ENCODE measurements at regions of chr15 and their contacts with region 1.

Region 1: GRCh38 chr15:90362936-90363212 is 10.8 kb downstream of the ZNF774 start:
- DNase-seq: no peak
- ATAC-seq: no peak
- H3K4me3 Mint-ChIP-seq: no peak overlapping the region
- H3K27ac Mint-ChIP-seq: peak overlapping the region; percentile 19
- H3K4me1 Mint-ChIP-seq: peaks cover 32% of the 10 kb centered on the region
- H3K27me3 Mint-ChIP-seq: peaks cover 2% of the 10 kb centered on the region

Region 2: DNA sequence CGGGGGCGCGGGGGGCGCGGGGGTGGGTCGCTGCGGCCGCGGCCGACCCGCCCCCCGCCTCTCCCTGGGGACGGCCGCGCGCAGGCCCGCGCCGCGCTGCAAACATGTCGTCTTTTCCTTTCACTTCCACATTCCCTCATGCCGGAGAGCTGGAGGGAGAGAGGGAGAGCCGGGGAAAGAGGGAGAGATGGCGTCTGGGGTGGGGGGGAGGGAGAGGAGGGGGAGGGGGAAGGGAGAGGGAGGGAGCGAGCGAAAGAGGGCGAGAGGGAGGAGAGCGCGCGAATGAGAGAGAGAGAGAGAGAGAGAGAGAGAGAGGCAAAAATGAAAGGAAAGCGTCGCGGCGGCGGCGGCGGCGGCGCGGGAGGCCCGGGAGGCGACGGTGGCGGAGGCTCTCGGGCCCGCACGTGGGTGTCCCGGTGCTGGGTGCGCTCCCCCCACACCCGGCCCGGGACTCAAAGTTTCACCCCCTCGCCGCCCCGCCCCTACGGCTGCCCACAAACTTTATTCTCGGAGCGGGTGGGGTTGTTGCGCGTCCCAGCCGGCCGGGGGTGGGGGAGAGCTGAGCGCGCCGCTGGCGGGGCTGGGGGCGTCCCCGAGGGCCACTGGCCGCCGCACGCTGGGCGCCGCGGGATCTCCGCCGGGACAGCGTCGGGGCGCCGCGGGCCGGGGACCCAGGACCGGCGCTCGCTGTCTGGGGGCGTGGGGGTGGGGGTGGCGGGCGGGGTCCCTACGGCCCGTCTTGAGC is 361.0 kb before region 1 on chr15:
- CTCF ChIA-PET with region 1: no interaction called
- DNase-seq: peak; percentile 70
- ATAC-seq: peak; percentile 60
- H3K4me3 Mint-ChIP-seq: peak overlapping the region; percentile 86
- H3K27ac Mint-ChIP-seq: peak overlapping the region; percentile 83
- H3K4me1 Mint-ChIP-seq: peaks cover 39% of the 10 kb centered on the region
- H3K27me3 Mint-ChIP-seq: no peaks in the 10 kb centered on the region

Region 3: DNA sequence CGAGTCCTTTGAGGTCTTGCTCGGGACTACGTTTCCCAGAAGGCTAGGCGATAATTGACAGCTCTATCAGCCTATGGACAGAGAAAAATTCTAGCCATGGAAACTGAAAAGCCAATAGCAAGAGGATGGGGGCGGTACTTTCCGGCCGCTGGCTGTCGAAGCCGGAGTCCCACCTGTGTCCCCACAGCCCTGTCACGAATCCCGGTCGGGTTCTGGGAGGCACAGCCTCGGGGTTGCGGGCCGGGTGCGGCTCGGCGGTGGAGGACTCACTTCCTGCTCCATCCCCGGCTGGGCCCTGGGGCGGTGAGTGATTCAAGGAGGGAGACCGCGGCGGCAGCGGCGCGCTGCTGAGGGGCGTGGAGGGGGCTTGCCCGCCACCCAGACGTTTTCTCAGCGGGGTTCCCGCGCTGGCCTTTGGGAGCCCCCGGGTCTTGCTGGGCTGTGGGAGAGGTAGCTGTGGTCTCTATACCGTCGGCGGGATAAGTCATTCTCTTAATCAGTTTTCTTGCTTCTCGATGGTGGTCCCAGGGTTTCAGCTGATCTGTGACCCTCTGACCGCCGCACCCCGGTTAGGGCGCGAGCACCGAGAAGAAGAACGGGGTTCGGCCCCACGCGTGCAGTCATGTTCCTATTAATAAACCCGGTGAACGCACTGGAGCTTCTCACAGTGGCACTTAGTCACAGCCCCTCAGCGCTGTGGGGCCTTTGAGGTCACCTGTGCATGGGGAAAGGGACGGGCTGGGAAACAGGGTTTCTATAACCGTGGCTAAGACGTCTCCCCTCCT is 10.6 kb before region 1 on chr15 and contains the start of gene ZNF774:
- CTCF ChIA-PET with region 1: interaction called, 16 read pairs
- DNase-seq: peak; percentile 95
- ATAC-seq: peak; percentile 99
- H3K4me3 Mint-ChIP-seq: peak within 1 kb of the TSS; percentile 81
- H3K27ac Mint-ChIP-seq: peak within 1 kb of the TSS; percentile 67
- H3K4me1 Mint-ChIP-seq: peaks cover 25% of the 10 kb centered on the region
- H3K27me3 Mint-ChIP-seq: peaks cover 11% of the 10 kb centered on the region
- total RNA-seq, gene ZNF774: 1.6 to 2.1 TPM

Region 4: DNA sequence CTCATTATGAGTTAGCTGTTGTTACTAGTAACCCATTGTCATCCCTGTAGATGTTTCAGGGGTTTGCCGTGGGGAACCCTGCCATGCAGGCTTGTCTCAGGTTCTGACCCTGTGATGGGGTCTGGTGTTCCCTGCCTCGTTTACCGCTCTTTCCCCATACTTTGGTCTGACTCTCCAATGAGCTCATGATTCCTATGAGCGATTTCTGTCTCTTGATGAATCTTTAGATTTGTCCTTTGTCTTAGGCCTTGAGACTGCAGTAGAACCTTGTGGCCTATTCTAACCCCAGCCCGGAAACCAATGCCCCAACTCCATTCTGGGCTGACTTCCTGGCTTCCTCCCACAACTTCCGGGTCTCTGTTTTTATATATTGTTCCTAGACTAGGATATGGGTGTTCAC is 13.9 kb after region 1 on chr15:
- CTCF ChIA-PET with region 1: interaction called, 67 read pairs
- DNase-seq: peak; percentile 93
- ATAC-seq: peak; percentile 92
- H3K4me3 Mint-ChIP-seq: peak overlapping the region; percentile 47
- H3K27ac Mint-ChIP-seq: peak overlapping the region; percentile 94
- H3K4me1 Mint-ChIP-seq: peaks cover 36% of the 10 kb centered on the region
- H3K27me3 Mint-ChIP-seq: no peaks in the 10 kb centered on the region

Region 5: DNA sequence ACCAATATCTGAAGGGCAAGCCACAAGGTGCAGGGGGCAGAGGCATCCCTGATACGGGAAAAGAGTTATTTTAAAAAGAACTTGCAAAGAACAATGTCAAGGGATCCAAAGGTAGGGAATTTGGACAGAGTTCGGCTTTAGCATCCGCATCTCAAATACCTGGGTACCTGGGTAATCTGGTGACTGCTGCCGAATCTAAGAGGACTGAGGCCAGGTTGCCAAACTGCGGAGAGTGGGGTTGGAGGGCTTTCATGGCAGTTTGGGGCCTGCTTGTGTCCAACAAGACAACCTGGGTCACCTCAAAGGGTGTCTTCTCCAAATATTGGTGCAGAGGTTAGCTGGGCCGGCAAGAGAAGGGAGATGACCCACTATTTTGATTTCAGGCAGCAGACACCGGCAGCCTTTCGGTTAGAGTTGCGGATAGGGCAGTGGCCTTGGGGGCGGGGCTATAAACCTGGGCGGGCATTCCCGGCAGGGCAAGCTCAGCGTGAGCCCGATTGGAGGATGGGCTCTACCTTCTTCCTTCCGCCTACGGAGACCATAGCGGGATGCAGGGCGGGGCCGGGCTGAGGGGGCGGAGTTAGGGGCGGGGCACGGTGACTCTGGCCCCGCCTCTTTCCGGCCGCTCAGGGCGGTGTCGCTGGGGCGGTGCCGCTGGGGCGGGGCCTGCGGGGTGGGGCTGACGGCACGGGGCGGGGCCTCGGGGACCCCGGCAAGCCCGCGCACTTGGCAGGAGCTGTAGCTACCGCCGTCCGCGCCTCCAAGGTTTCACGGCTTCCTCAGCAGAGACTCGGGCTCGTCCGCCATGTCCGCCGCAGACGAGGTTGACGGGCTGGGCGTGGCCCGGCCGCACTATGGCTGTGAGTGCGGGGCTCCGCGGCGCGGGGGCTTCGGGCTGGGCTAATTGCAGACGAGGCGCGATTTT is 24.9 kb after region 1 on chr15 and contains the start of gene IQGAP1:
- CTCF ChIA-PET with region 1: interaction called, 54 read pairs
- DNase-seq: peak; percentile 99
- ATAC-seq: peak; percentile 93
- H3K4me3 Mint-ChIP-seq: peak within 1 kb of the TSS; percentile 95
- H3K27ac Mint-ChIP-seq: peak within 1 kb of the TSS; percentile 94
- H3K4me1 Mint-ChIP-seq: peaks cover 45% of the 10 kb centered on the region
- H3K27me3 Mint-ChIP-seq: no peaks in the 10 kb centered on the region
- total RNA-seq, gene IQGAP1: 217 to 221 TPM

Region 6: DNA sequence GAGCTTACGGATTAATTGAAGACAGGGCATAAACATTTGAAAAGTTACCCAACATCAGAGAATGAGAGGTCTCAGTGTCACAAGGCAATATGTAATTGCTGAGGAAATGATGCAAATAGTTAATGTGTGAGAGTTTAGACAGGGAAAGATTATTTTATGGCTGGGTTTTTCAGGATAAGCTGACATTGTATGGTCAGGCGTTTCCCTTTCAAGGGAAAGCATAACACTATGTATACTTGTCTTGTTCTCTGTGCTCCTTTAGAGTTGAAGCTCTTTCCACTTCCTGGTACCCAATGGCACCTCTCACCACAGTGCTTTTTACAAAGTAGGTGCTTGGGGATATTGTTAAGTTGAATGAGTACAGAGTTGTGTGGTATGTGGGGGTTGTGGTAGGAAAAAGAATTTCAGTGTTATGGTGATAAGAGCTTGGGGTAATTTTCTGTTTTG is 45.0 kb after region 1 on chr15:
- CTCF ChIA-PET with region 1: interaction called, 20 read pairs
- DNase-seq: peak; percentile 79
- ATAC-seq: peak; percentile 93
- H3K4me3 Mint-ChIP-seq: peak overlapping the region; percentile 63
- H3K27ac Mint-ChIP-seq: peak overlapping the region; percentile 81
- H3K4me1 Mint-ChIP-seq: peaks cover 82% of the 10 kb centered on the region
- H3K27me3 Mint-ChIP-seq: no peaks in the 10 kb centered on the region

Region 7: GRCh38 chr15:90419738-90420406 is 57.0 kb after region 1 on chr15:
- CTCF ChIA-PET with region 1: interaction called, 14 read pairs
- DNase-seq: peak; percentile 65
- ATAC-seq: peak; percentile 96
- H3K4me3 Mint-ChIP-seq: peak overlapping the region; percentile 20
- H3K27ac Mint-ChIP-seq: peak overlapping the region; percentile 74
- H3K4me1 Mint-ChIP-seq: peaks cover 55% of the 10 kb centered on the region
- H3K27me3 Mint-ChIP-seq: no peaks in the 10 kb centered on the region

Region 8: GRCh38 chr15:90482124-90483011 is 119.5 kb after region 1 on chr15:
- CTCF ChIA-PET with region 1: interaction called, 56 read pairs
- DNase-seq: peak; percentile 67
- ATAC-seq: peak; percentile 43
- H3K4me3 Mint-ChIP-seq: no peak overlapping the region
- H3K27ac Mint-ChIP-seq: no peak overlapping the region
- H3K4me1 Mint-ChIP-seq: peaks cover 47% of the 10 kb centered on the region
- H3K27me3 Mint-ChIP-seq: no peaks in the 10 kb centered on the region

Region 9: GRCh38 chr15:90557186-90558084 is 194.6 kb after region 1 on chr15:
- CTCF ChIA-PET with region 1: no interaction called
- DNase-seq: no peak
- ATAC-seq: no peak
- H3K4me3 Mint-ChIP-seq: no peak overlapping the region
- H3K27ac Mint-ChIP-seq: no peak overlapping the region
- H3K4me1 Mint-ChIP-seq: peaks cover 58% of the 10 kb centered on the region
- H3K27me3 Mint-ChIP-seq: no peaks in the 10 kb centered on the region

Measured in activated CD8-positive, alpha-beta memory T cell treated with anti-CD3 and anti-CD28 coated beads, Interleukin-2, amount 10 ng/mL, durations not matched to agents 7 days and 5 days (primary cell).